Activated CD4-positive, alpha-beta T cell treated with anti-CD3 and anti-CD28 coated beads for 36 hours (primary cell): ENCODE measurements at regions of chr2 and their contacts with region 1.

Region 1: GRCh38 chr2:104254020-104254419 is 599.9 kb upstream of the POU3F3 start:
- DNase-seq: no peak
- ATAC-seq: no peak
- H3K4me3 Mint-ChIP-seq: no peak overlapping the region
- H3K27ac Mint-ChIP-seq: no peak overlapping the region
- H3K4me1 Mint-ChIP-seq: no peaks in the 10 kb centered on the region
- H3K27me3 Mint-ChIP-seq: no peaks in the 10 kb centered on the region

Region 2: DNA sequence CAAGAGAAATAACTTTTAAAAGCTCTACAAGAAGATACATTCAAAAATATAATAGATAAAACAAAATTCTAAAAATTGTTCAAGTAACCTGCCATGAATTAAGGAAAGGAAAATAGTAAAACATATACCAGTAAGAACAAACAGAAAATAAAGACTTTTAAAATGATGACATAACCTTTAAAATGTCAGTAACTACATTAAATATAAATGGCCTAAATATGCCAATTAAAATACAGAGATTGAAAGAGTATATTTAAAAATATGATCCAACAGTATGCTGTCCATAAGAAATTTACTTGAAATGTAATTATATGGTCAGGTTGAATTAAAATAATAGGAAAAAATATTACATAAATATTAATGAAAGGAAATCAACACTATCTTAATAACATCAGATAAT is 311.8 kb before region 1 on chr2:
- CTCF ChIA-PET with region 1: no interaction called
- POLR2A ChIA-PET with region 1: no interaction called
- intact Hi-C with region 1: no loop called
- DNase-seq: no peak
- ATAC-seq: no peak
- H3K4me3 Mint-ChIP-seq: no peak overlapping the region
- H3K27ac Mint-ChIP-seq: no peak overlapping the region
- H3K4me1 Mint-ChIP-seq: no peaks in the 10 kb centered on the region
- H3K27me3 Mint-ChIP-seq: no peaks in the 10 kb centered on the region

Region 3: GRCh38 chr2:104186405-104186804 is 67.6 kb before region 1 on chr2:
- CTCF ChIA-PET with region 1: no interaction called
- POLR2A ChIA-PET with region 1: no interaction called
- intact Hi-C with region 1: loop called in 1 of 2 experiments (anchors 2 kb)
- DNase-seq: no peak
- ATAC-seq: no peak
- H3K4me3 Mint-ChIP-seq: no peak overlapping the region
- H3K27ac Mint-ChIP-seq: no peak overlapping the region
- H3K4me1 Mint-ChIP-seq: no peaks in the 10 kb centered on the region
- H3K27me3 Mint-ChIP-seq: no peaks in the 10 kb centered on the region

Region 4: GRCh38 chr2:104744537-104744936 is 490.5 kb after region 1 on chr2:
- CTCF ChIA-PET with region 1: no interaction called
- POLR2A ChIA-PET with region 1: no interaction called
- intact Hi-C with region 1: no loop called
- DNase-seq: no peak
- ATAC-seq: no peak
- H3K4me3 Mint-ChIP-seq: no peak overlapping the region
- H3K27ac Mint-ChIP-seq: no peak overlapping the region
- H3K4me1 Mint-ChIP-seq: no peaks in the 10 kb centered on the region
- H3K27me3 Mint-ChIP-seq: no peaks in the 10 kb centered on the region